ENCODE measurements at regions of chr11 and their contacts with region 1.

Region 1: GRCh38 chr11:129117595-129118350 is 74.4 kb downstream of the ARHGAP32 start:
- DNase-seq: peak in 7 of 9 donors; percentile 38 to 74 (median 62)
- ATAC-seq: peak; percentile 78
- H3K4me3 ChIP-seq: no peak overlapping the region
- H3K4me3 Mint-ChIP-seq: no peak overlapping the region
- H3K27ac ChIP-seq: no peak overlapping the region
- H3K27ac Mint-ChIP-seq: no peak overlapping the region
- H3K4me1 ChIP-seq: no peaks in the 10 kb centered on the region
- H3K4me1 Mint-ChIP-seq: peaks cover 0 to 2% (median 0%) of the 10 kb centered on the region in 7 donors
- H3K27me3 ChIP-seq: no peaks in the 10 kb centered on the region
- H3K27me3 Mint-ChIP-seq: peaks cover 0 to 5% (median 0%) of the 10 kb centered on the region in 5 donors

Region 2: DNA sequence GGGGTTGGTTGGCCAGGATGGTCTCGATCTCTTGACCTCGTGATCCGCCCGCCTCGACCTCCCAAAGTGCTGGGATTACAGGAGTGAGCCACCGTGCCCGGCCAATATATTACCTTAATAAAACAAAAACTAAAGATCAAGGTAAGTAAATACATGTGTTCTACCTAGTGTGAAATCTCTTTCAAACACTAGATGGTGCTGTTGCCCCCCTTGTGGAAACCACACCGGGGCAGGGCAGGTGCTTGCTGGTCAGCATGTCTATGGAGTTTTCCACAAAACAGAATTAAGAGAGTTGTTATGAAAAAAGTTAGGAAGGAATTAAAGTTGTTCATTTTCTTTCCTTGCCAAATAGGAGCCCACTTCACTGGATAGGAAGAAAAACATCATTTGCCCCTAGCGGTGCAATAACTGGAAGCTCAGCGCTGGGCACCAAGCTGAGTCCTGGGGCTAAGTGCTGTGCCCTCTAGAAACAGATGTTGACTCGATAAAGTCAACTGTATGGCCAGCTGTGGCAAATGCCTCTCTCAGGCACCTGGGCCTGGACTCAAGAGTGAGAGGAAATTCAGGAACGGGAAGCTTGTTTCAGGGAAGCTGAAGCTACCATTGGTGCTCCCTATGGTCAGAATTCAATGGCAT is 233.0 kb before region 1 on chr11:
- CTCF ChIA-PET with region 1: no interaction called
- POLR2A ChIA-PET with region 1: no interaction called
- intact Hi-C with region 1: loop called (anchors 1 to 2 kb)
- DNase-seq: peak in 8 of 9 donors; percentile 41 to 69 (median 60)
- ATAC-seq: peak; percentile 79
- H3K4me3 ChIP-seq: no peak overlapping the region
- H3K4me3 Mint-ChIP-seq: no peak overlapping the region
- H3K27ac ChIP-seq: no peak overlapping the region
- H3K27ac Mint-ChIP-seq: no peak overlapping the region
- H3K4me1 ChIP-seq: no peaks in the 10 kb centered on the region
- H3K4me1 Mint-ChIP-seq: peaks cover 0 to 8% (median 3%) of the 10 kb centered on the region in 7 donors
- H3K27me3 ChIP-seq: peaks cover 7 to 9% of the 10 kb centered on the region in 2 donors
- H3K27me3 Mint-ChIP-seq: peaks cover 54 to 78% (median 73%) of the 10 kb centered on the region in 5 donors

Region 3: GRCh38 chr11:129215506-129216245 is 97.9 kb after region 1 on chr11:
- CTCF ChIA-PET with region 1: no interaction called
- POLR2A ChIA-PET with region 1: no interaction called
- intact Hi-C with region 1: loop called in 1 of 2 experiments (anchors 5 kb)
- DNase-seq: no peak
- ATAC-seq: no peak
- H3K4me3 ChIP-seq: no peak overlapping the region
- H3K4me3 Mint-ChIP-seq: no peak overlapping the region
- H3K27ac ChIP-seq: no peak overlapping the region
- H3K27ac Mint-ChIP-seq: no peak overlapping the region
- H3K4me1 ChIP-seq: no peaks in the 10 kb centered on the region
- H3K4me1 Mint-ChIP-seq: peaks cover 0 to 13% (median 3%) of the 10 kb centered on the region in 7 donors
- H3K27me3 ChIP-seq: no peaks in the 10 kb centered on the region
- H3K27me3 Mint-ChIP-seq: peaks cover 0 to 8% (median 0%) of the 10 kb centered on the region in 5 donors

Region 4: GRCh38 chr11:129331871-129332274 is 214.1 kb after region 1 on chr11:
- CTCF ChIA-PET with region 1: interaction called, 29 read pairs
- POLR2A ChIA-PET with region 1: no interaction called
- intact Hi-C with region 1: loop called (anchors 1 kb)
- DNase-seq: peak; percentile 18 to 65 (median 45)
- ATAC-seq: peak; percentile 77
- H3K4me3 ChIP-seq: no peak overlapping the region
- H3K4me3 Mint-ChIP-seq: peak overlapping the region in 1 of 10 donors; percentile 34
- H3K27ac ChIP-seq: no peak overlapping the region
- H3K27ac Mint-ChIP-seq: no peak overlapping the region
- H3K4me1 ChIP-seq: no peaks in the 10 kb centered on the region
- H3K4me1 Mint-ChIP-seq: peaks cover 0 to 8% (median 3%) of the 10 kb centered on the region in 7 donors
- H3K27me3 ChIP-seq: no peaks in the 10 kb centered on the region
- H3K27me3 Mint-ChIP-seq: peaks cover 0 to 6% (median 0%) of the 10 kb centered on the region in 5 donors

Region 5: DNA sequence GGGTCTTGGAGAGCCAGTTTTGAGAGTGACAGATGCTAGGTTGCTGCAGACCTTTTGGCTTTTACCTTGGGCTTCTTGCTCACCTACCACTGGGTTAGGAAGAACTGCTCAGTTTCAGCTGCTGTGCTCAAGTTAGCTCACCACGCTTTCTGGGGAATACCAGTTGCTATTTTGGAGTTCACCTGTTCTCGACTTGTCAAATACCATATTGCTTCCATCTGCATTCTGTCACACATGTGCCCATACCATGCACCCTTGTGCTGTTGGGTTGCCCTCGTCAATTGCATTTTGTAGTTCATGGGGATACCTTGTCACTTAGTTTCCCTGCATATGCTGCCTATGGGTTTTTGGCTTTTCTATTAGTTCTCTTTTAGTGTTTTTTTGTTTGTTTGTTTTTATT is 234.9 kb after region 1 on chr11:
- CTCF ChIA-PET with region 1: no interaction called
- POLR2A ChIA-PET with region 1: no interaction called
- intact Hi-C with region 1: no loop called
- DNase-seq: no peak
- ATAC-seq: no peak
- H3K4me3 ChIP-seq: no peak overlapping the region
- H3K4me3 Mint-ChIP-seq: no peak overlapping the region
- H3K27ac ChIP-seq: no peak overlapping the region
- H3K27ac Mint-ChIP-seq: no peak overlapping the region
- H3K4me1 ChIP-seq: no peaks in the 10 kb centered on the region
- H3K4me1 Mint-ChIP-seq: no peaks in the 10 kb centered on the region
- H3K27me3 ChIP-seq: no peaks in the 10 kb centered on the region
- H3K27me3 Mint-ChIP-seq: peaks cover 0 to 29% (median 9%) of the 10 kb centered on the region in 5 donors

Region 6: DNA sequence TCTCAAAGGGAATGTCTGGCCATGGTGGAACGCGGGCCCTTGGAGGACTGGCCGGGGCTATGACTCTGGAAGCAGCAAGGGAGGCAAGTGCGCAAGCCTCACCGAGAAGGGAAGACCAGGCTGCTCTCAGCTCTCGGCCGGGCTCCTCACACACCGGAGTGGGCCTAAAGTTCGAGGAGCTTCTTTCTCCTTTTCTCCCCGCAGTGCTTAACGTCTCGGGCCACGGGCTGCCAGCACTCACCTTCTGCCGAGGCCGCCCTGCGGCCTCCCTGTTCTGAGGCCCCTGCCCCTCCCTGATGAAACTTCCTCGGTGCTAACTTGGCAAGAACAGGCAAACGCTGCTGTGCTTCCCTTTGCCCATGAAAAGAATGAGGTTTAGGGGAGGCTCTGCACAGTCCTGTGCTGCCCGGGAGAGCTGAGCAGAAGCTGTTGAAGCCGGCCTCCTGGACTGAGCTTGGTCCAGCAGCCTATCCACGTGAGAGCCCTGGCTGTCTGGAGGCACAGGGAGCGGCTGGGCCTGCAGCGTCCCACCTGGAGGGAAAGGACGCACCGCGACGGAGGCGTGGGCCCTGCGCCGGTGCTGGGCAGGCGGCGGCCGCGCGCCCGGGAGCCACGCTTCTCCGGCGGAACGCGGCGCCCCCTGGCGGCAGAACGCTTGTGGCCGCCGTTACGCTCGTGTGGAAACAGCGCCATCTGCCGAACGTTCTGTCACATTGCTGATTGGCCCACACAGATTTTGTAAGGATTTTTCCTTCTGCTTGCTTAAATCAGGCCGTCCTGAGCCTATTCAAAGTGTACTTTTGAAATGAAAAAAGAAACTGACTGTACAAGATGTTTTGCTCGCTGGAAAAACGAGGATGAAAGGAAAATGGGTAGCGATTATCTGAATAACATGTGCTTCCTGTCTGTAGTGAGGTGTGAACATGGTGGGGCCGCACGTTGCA is 632.8 kb after region 1 on chr11:
- CTCF ChIA-PET with region 1: interaction called, 3 read pairs
- POLR2A ChIA-PET with region 1: no interaction called
- intact Hi-C with region 1: loop called in 1 of 2 experiments (anchors 1 kb)
- DNase-seq: peak; percentile 53 to 89 (median 81)
- ATAC-seq: peak; percentile 97
- H3K4me3 ChIP-seq: peak overlapping the region; percentile 51
- H3K4me3 Mint-ChIP-seq: peak overlapping the region in 9 of 10 donors; percentile 25 to 76 (median 61)
- H3K27ac ChIP-seq: no peak overlapping the region
- H3K27ac Mint-ChIP-seq: peak overlapping the region in 1 of 9 donors; percentile 48
- H3K4me1 ChIP-seq: peaks cover 2 to 5% of the 10 kb centered on the region in 2 donors
- H3K4me1 Mint-ChIP-seq: peaks cover 0 to 9% (median 3%) of the 10 kb centered on the region in 7 donors
- H3K27me3 ChIP-seq: no peaks in the 10 kb centered on the region
- H3K27me3 Mint-ChIP-seq: peaks cover 0 to 19% (median 0%) of the 10 kb centered on the region in 5 donors